MCF 10A (cell line): ENCODE measurements at regions of chr14 and their contacts with region 1.

Region 1: GRCh38 chr14:69107407-69108003 is 45.4 kb downstream of the DCAF5 start:
- DNase-seq: peak; percentile 84
- H3K4me3 Mint-ChIP-seq: no peak overlapping the region
- H3K27ac Mint-ChIP-seq: no peak overlapping the region
- H3K4me1 Mint-ChIP-seq: peaks cover 2% of the 10 kb centered on the region
- H3K27me3 Mint-ChIP-seq: no peaks in the 10 kb centered on the region
- CTCF ChIP-seq: peak; percentile 79

Region 2: DNA sequence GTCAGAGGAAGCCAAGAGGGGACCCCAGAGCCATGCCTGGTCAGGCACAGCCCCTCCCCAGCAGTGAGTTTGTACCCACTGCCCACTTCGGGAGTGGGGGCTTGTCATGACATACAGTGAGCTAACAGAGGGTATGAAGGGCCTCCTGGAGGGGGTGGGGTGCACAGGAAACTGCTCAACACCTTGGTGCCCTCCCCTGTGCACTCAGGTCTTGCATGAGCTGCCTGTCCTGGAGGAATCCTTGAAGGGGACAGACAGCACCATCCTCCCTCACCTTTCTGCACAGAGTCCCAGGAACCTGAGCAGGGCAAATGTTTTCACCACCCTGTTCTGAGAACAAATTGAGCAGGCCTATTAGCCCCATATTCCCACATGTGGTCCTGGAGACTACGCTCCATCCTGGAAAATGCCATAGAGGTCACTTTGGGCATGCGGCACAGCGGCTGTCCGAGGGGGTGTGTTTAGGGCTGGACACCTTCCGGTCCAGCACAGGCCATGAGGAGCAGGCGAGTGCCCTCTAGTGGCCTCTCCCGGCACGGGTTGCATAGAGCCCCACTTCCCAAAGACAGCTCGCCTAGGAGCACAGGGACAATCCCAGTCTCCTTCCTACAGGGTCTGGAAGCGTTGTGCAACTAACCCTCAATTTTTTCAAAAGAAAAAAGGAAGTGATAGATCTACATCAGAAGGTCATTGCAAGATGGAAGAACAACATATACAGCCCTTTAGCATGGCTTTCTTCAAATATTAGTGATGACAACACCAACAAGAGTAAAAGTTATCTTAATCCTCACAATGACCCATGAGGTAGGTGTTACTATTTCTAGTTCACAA is 282.8 kb before region 1 on chr14:
- CTCF ChIA-PET with region 1: no interaction called
- POLR2A ChIA-PET with region 1: no interaction called
- intact Hi-C with region 1: no loop called
- DNase-seq: peak; percentile 86
- H3K4me3 Mint-ChIP-seq: no peak overlapping the region
- H3K27ac Mint-ChIP-seq: no peak overlapping the region
- H3K4me1 Mint-ChIP-seq: peaks cover 8% of the 10 kb centered on the region
- H3K27me3 Mint-ChIP-seq: no peaks in the 10 kb centered on the region
- CTCF ChIP-seq: peak; percentile 80

Region 3: DNA sequence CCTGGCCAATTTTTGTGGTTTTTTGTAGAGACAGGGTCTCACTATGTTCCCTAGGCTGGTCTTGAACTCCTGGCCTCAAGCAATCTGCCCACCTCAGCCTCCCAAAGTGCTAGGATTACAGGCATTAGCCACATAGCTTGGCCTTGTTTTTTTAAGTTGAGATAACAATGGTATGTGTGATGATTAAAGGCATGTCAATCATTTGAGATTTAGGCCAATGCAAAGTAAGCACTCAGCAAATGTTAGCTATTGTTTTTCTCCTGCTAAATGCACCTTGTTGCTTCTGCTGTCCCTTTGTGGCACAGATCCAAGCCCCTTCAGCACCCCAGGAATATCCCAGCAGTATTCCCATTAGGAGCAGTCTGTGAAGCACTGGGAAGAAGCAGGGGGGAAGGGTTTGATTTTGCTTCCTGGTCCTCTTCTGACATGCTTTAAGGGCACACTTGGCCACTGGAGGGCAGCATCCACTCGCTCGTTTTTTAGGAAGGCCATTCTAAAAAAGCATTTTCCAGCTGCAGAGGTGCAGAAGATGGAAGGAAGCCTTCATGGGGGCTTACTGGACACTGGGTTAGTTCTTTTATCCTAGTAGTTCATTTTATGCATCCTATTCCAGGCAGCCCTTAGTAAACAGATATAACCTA is 244.4 kb before region 1 on chr14:
- CTCF ChIA-PET with region 1: interaction called, 109 read pairs
- POLR2A ChIA-PET with region 1: interaction called, 15 read pairs
- intact Hi-C with region 1: loop called (anchors 1 kb)
- DNase-seq: peak; percentile 85
- H3K4me3 Mint-ChIP-seq: no peak overlapping the region
- H3K27ac Mint-ChIP-seq: no peak overlapping the region
- H3K4me1 Mint-ChIP-seq: no peaks in the 10 kb centered on the region
- H3K27me3 Mint-ChIP-seq: no peaks in the 10 kb centered on the region
- CTCF ChIP-seq: peak; percentile 71

Region 4: DNA sequence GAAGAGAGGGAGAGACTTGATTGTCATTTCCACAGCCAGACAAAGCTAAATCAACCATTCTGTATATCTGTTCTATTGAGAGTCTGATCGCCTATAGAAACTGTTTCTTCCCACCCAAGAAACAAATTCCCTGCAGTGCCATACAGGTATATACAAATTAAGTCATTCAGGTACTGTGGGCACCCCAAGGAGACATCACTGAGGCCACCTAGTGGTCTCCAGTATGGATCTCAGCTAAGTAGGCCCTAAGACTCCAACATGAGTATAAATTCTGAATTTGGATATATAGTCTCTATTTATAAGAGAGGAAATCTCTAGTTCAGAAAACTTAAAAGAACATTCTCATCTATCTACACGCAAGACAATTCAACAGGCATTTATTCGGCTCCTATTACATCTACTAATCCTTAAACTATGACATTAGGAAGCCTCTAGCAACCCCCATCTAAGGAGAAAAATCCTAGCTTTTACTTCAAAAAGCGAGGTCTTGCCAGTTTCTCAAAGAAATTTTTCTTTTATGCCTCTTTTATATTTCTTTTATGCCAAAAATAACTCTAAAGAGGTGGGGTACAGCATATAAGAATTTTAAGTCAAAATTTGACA is 17.2 kb before region 1 on chr14:
- CTCF ChIA-PET with region 1: interaction called, 11 read pairs
- POLR2A ChIA-PET with region 1: no interaction called
- intact Hi-C with region 1: no loop called
- DNase-seq: peak; percentile 65
- H3K4me3 Mint-ChIP-seq: no peak overlapping the region
- H3K27ac Mint-ChIP-seq: no peak overlapping the region
- H3K4me1 Mint-ChIP-seq: peaks cover 28% of the 10 kb centered on the region
- H3K27me3 Mint-ChIP-seq: no peaks in the 10 kb centered on the region
- CTCF ChIP-seq: peak; percentile 80